Aorta (tissue), 5 donors: ENCODE measurements at regions of chr15 and their contacts with region 1.

Region 1: GRCh38 chr15:25508369-25509002 is 69.7 kb upstream of the UBE3A start:
- DNase-seq: no peak
- ATAC-seq: no peak
- H3K4me3 ChIP-seq: no peak overlapping the region
- H3K27ac ChIP-seq: no peak overlapping the region
- H3K4me1 ChIP-seq: peaks cover 0 to 4% of the 10 kb centered on the region in 2 donors
- H3K27me3 ChIP-seq: no peaks in the 10 kb centered on the region

Region 2: DNA sequence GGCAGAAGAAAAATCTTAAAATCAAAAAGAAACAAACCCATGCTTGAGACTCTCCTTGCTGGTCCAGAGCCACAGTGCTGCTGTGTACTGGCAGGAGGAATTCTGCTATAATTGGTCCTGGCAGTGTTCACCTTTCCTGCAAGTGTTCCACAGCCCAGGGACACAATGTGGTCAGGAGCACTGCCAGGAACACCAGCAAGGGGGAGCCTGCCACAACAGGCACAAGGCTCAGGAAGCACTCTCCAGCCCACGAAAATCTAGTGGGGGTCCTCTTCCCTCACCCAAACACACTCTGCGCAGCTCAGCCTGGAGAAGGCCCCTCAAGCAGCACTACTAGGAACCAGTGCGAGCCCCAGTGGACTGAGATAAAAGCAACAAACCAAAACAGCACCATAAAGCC is 162.5 kb before region 1 on chr15:
- intact Hi-C with region 1: loop called (anchors 10 kb)
- DNase-seq: peak in 1 of 2 donors; percentile 58
- ATAC-seq: peak; percentile 81
- H3K4me3 ChIP-seq: no peak overlapping the region
- H3K27ac ChIP-seq: no peak overlapping the region
- H3K4me1 ChIP-seq: no peaks in the 10 kb centered on the region
- H3K27me3 ChIP-seq: no peaks in the 10 kb centered on the region

Region 3: GRCh38 chr15:25693321-25694237 is 185.1 kb after region 1 on chr15:
- intact Hi-C with region 1: loop called (anchors 5 to 10 kb)
- DNase-seq: peak; percentile 62 to 81
- ATAC-seq: peak; percentile 73
- H3K4me3 ChIP-seq: no peak overlapping the region
- H3K27ac ChIP-seq: no peak overlapping the region
- H3K4me1 ChIP-seq: no peaks in the 10 kb centered on the region
- H3K27me3 ChIP-seq: no peaks in the 10 kb centered on the region

Region 4: DNA sequence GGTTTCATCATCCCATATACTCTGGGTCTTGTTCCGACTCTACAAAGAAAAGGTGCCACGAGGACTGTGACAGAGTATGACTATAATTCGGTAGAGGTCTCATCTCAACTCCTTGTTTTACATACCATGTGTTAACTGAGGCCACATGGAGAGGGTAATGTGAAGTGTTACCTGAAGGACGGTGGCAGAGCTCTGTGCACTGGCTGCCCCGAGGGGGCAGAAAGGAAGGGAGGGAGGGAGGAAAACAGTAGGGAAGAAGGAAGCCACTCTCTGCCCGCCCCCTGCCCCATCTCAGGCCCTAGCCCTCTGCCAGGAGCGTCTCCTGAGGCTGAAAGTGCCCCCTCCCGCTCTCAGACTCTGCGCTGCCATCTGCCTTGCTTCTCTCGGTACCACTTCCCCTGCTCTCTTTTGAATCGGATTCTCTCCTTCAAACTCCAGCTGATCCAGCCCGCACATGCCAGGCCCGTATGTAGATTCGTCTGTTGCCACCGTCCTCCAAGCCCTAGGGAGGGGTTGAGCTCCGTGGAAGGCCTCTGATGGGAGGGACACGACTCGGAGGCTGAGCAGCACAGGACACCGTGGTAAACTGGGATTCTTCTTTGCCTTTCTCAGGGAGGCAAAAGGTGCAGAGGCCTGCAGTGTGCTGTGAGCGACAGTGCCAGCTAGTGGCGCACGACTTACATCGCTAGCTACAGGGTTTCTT is 425.1 kb after region 1 on chr15:
- intact Hi-C with region 1: loop called (anchors 5 to 10 kb)
- DNase-seq: peak; percentile 88 to 91
- ATAC-seq: peak; percentile 92
- H3K4me3 ChIP-seq: peak overlapping the region in 1 of 2 donors; percentile 16
- H3K27ac ChIP-seq: no peak overlapping the region
- H3K4me1 ChIP-seq: no peaks in the 10 kb centered on the region
- H3K27me3 ChIP-seq: no peaks in the 10 kb centered on the region

Region 5: GRCh38 chr15:26260517-26261133 is 752.1 kb after region 1 on chr15:
- intact Hi-C with region 1: loop called in 1 of 2 experiments (anchors 5 kb)
- DNase-seq: no peak
- ATAC-seq: peak; percentile 70
- H3K4me3 ChIP-seq: no peak overlapping the region
- H3K27ac ChIP-seq: no peak overlapping the region
- H3K4me1 ChIP-seq: no peaks in the 10 kb centered on the region
- H3K27me3 ChIP-seq: peaks cover 0 to 2% of the 10 kb centered on the region in 2 donors